ENCODE measurements at regions of chr20 and their contacts with region 1.

Region 1: DNA sequence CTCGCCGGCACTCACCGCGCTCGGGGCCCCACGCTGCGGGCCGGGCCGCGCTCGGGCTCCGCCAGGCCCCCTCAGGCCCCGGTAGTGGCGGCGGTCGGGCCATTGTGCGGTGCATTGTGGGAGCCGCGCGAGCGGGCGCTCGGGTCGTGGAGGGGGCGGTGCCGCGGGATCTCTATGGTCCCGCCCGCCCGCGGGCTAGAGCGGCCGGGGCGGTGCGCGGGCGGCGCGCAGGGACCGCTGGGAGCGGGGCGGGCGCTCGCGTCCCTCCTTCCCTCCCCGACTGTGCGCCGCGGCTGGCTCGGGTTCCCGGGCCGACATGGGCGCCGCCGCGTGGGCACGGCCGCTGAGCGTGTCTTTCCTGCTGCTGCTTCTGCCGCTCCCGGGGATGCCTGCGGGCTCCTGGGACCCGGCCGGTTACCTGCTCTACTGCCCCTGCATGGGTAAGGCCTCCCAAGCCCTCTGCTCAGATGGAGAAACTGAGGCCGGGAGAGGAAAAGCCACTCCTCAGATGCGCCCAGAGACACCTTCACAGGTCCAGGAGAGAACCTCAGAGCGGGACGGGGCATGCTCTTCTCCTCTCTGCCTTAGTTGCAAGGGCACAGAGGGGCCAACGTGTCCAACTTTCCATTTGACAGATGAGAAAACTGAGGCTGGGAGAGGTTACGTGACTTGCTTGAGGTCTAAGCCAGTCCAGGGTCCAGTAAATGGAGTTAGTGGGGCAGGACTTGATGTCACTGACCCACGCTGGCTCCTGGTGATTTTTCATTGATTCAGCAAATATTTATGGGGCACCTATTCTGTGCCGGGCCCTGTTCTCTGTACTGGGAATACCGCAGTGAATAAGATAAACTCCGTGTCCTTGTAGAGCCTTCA is at the starts of genes PLAGL2 and POFUT1:
- DNase-seq: peak; percentile 88
- H3K4me3 Mint-ChIP-seq: peak within 1 kb of the TSS; percentile 98
- H3K27ac Mint-ChIP-seq: peak within 1 kb of the TSS; percentile 91
- H3K4me1 Mint-ChIP-seq: peaks cover 64% of the 10 kb centered on the region
- H3K27me3 Mint-ChIP-seq: no peaks in the 10 kb centered on the region
- total RNA-seq, gene PLAGL2: 125 and 126 TPM in 2 replicates
- total RNA-seq, gene POFUT1: 67.4 and 68.8 TPM in 2 replicates

Region 2: DNA sequence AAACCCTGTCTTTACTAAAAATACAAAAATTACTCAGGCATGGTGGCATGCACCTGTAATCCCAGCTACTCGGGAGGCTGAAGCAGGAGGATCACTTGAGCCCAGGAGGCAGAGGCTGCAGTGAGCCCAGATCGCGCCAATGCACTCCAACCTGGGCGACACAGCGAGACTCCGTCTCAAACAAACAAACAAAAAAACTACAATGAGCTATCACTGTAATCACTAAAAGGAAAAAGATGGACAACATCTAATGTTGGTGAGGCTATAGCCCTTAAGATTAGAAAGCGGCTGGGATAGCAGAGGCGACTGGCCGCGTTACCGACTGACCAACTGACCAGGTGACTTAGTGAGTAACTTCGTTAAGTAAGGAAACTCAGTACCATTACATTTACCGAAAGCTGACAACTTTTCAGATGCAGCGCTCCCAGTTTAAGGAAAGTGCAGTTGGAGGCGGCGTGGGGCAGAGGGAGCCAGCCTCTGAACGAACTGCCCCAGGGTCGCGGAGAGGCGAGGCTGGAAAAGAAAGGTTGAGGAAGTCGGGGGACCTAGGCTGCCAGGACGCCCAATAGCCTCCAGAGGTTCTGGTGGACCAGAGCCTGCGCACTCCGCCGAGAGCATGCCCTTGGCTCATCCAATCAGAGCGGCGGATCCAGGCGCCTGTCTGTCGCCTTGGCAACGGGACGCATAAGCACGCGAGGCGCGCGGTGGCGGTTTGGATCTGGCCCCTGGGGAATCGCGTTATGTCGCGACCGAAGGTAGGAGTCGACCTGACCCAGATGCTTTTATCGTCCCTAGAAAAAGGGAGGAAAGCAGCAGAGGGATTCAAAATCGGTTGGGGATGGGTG is 328.5 kb before region 1 on chr20:
- intact Hi-C with region 1: no loop called
- DNase-seq: peak; percentile 75
- H3K4me3 Mint-ChIP-seq: peak overlapping the region; percentile 87
- H3K27ac Mint-ChIP-seq: peak overlapping the region; percentile 62
- H3K4me1 Mint-ChIP-seq: peaks cover 11% of the 10 kb centered on the region
- H3K27me3 Mint-ChIP-seq: peaks cover 36% of the 10 kb centered on the region

Region 3: DNA sequence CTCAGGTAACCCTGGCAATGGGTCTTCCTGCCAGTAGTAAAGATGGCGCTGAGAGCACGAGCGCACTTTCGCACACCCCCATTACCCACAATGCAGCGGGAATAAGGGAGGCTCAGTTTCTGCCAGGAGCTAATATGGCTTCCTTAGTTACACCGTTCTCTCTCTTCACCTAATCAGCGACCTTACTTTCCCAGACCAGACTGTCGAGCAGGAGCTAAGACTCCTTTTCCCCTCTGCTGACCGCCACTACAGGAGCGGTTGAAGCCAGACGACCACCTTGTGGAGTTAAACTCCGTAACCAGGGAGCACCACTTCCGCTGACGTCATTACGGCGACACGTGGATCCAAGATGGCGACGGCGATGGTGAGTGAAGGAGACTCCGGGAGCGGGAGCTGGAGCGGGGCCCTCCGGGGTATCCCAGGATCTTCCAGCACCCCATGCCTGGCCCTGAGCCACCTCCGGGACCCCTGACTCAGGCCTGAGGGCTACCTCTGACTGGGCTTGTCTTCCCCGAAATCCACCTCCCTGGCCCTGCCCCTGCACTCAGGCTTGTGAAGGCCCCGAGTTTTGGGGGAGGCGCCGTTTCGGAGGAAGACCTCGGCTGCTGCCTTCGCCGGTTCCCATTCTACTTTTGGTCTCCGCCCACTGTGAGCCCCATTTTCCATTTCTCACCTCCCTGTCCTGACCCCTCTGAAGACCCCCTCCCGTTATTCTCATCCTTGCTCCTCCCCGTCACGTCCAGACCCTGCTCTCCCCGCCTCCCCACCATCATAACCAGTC is 98.3 kb before region 1 on chr20 and contains the start of gene TM9SF4:
- intact Hi-C with region 1: loop called (anchors 2 kb)
- DNase-seq: peak; percentile 86
- H3K4me3 Mint-ChIP-seq: peak within 1 kb of the TSS; percentile 95
- H3K27ac Mint-ChIP-seq: peak within 1 kb of the TSS; percentile 99
- H3K4me1 Mint-ChIP-seq: peaks cover 17% of the 10 kb centered on the region
- H3K27me3 Mint-ChIP-seq: peaks cover 3% of the 10 kb centered on the region
- total RNA-seq, gene TM9SF4: 47.7 and 49.2 TPM in 2 replicates

Region 4: DNA sequence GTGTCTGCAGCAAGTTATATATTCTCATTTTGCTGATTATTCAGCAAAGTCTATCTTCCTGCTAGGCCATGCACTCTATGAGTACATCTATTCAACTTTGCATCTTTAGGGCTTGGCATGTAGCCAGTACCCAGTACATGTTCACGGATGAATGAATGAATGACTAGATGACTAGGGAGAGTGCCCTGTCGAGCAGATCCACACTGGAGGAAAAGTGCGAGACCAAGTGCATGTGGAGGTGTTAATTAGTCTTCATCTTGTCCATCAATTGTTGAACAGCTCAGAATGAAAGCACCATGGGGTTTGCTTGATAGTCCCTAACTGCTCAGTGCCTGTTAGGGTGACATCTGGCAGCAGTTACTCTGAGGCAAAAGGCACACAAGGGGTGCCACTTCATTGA is 67.9 kb before region 1 on chr20:
- intact Hi-C with region 1: no loop called
- DNase-seq: no peak
- H3K4me3 Mint-ChIP-seq: no peak overlapping the region
- H3K27ac Mint-ChIP-seq: no peak overlapping the region
- H3K4me1 Mint-ChIP-seq: no peaks in the 10 kb centered on the region
- H3K27me3 Mint-ChIP-seq: no peaks in the 10 kb centered on the region

Region 5: DNA sequence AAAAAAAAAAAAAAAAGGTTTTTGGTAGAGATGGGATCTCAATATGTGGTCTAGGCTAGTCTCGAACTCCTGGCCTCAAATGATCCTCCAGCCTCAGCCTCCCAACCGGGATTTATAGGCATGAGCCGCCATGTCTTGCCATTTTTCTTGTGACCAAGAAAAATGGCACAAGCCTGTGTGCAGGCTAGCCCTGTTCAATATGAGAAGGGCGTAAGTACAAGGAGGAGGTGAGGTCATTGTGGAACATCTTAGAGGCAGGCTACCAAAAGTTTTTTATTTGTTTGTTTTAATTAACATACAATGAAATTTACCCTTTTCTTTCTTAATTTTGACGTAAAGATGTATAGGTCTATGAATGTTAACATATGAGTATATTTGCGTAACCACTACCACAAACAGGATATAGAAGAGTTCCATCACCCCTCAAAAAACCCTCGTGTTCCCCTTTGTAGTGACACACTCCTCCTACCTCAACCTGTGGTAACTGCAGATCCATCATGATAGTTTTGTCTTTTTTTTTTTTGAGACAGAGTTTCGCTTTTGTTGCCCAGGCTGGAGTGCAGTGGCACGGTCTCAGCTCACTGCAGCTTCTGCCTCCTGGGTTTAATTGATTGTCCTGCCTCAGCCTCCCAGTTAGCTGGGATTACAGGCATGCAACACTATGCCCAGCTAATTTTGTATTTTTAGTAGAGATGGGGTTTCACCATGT is 41.3 kb after region 1 on chr20:
- intact Hi-C with region 1: loop called (anchors 1 kb)
- DNase-seq: peak; percentile 46
- H3K4me3 Mint-ChIP-seq: no peak overlapping the region
- H3K27ac Mint-ChIP-seq: peak overlapping the region; percentile 96
- H3K4me1 Mint-ChIP-seq: peaks cover 50% of the 10 kb centered on the region
- H3K27me3 Mint-ChIP-seq: no peaks in the 10 kb centered on the region

Region 6: DNA sequence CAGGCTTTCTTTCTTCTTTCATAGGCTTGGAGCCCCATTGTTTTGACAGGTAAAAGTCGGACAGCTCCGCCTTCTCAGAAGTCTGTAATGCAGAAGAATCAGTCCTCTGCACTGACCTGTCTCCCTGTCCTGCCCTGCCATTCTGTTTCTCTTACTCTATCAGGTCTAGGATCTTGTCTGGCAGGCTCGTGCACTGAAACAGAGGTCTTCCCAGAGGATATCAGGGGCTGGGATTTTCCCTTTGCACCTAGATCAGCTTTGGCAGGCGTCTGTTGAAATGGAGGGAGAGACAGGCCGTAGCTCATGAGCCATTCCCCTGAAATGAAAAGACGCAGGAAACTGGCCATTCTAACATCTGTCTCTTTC is 94.6 kb after region 1 on chr20:
- intact Hi-C with region 1: loop called (anchors 5 kb)
- DNase-seq: no peak
- H3K4me3 Mint-ChIP-seq: no peak overlapping the region
- H3K27ac Mint-ChIP-seq: peak overlapping the region; percentile 76
- H3K4me1 Mint-ChIP-seq: peaks cover 37% of the 10 kb centered on the region
- H3K27me3 Mint-ChIP-seq: no peaks in the 10 kb centered on the region

Region 7: DNA sequence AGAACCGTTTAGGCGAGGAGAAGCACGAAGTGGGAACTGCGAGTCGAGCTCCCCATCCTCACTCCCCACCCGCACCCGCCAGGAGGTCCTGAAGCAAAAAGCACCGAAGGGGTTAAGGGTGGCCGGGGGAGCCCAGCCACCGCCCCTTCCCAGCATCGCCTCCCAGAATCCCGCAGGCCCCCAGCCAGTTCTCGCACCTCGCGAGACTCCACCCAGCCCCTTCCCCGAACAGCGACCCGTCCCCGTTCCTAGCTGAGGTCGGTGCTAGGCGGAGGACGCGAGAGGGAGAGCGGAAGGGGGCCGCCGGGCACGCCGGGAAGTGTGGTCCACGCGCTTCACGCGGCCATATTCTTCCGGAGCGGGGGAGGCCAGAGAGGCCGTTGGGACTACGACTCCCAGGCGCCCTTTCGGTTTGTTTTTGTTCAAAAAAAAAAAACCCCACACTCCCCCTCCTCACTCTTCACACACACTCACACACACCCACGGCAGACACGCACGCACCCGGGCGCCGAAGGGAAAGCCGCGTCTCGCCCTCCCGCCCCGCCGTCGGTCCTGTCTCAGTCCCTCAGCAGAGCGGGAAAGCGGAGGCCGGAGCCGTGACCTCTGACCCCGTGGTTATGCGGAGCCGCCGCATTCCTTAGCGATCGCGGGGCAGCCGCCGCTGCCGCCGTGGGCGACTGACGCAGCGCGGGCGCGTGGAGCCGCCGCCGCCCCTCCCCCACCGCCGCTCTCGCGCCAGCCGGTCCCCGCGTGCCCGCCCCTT is 150.2 kb after region 1 on chr20 and contains the start of gene ASXL1:
- intact Hi-C with region 1: loop called (anchors 1 kb)
- DNase-seq: peak; percentile 96
- H3K4me3 Mint-ChIP-seq: peak within 1 kb of the TSS; percentile 99
- H3K27ac Mint-ChIP-seq: peak within 1 kb of the TSS; percentile 100
- H3K4me1 Mint-ChIP-seq: peaks cover 59% of the 10 kb centered on the region
- H3K27me3 Mint-ChIP-seq: no peaks in the 10 kb centered on the region
- total RNA-seq, gene ASXL1: 141 and 145 TPM in 2 replicates